Activated CD4-positive, alpha-beta memory T cell treated with anti-CD3 and anti-CD28 coated beads for 36 hours (primary cell): ENCODE measurements at regions of chr19 and their contacts with region 1.

Region 1: GRCh38 chr19:48588670-48589399 is 17.7 kb upstream of the SPACA4 start:
- DNase-seq: peak; percentile 92
- H3K4me3 Mint-ChIP-seq: peak overlapping the region; percentile 65
- H3K27ac Mint-ChIP-seq: peak overlapping the region; percentile 63
- H3K4me1 Mint-ChIP-seq: peaks cover 18% of the 10 kb centered on the region
- H3K27me3 Mint-ChIP-seq: no peaks in the 10 kb centered on the region

Region 2: DNA sequence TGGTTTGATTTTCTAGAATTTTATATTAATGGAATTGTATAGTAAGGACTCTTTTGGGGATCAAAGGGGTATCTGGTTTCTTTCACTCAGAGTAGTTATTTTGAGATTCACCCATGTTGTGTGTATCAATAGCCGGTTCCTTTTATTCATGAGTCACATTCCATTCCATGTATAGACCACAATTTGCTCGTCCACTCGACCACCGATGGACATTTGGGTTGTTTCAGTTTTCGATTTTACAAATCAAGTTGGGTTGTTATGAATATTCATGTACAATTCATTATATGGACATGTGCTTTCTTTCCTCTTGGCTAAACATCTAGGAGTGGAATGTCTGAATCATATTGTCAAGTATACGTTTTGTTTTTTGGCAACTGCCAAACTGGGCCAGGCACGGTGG is 273.1 kb before region 1 on chr19:
- CTCF ChIA-PET with region 1: interaction called, 13 read pairs
- POLR2A ChIA-PET with region 1: no interaction called
- intact Hi-C with region 1: loop called (anchors 10 kb)
- DNase-seq: no peak
- H3K4me3 Mint-ChIP-seq: no peak overlapping the region
- H3K27ac Mint-ChIP-seq: no peak overlapping the region
- H3K4me1 Mint-ChIP-seq: peaks cover 9% of the 10 kb centered on the region
- H3K27me3 Mint-ChIP-seq: no peaks in the 10 kb centered on the region

Region 3: GRCh38 chr19:48351341-48351752 is 237.5 kb before region 1 on chr19:
- CTCF ChIA-PET with region 1: interaction called, 19 read pairs
- POLR2A ChIA-PET with region 1: no interaction called
- intact Hi-C with region 1: no loop called
- DNase-seq: peak; percentile 89
- H3K4me3 Mint-ChIP-seq: no peak overlapping the region
- H3K27ac Mint-ChIP-seq: no peak overlapping the region
- H3K4me1 Mint-ChIP-seq: peaks cover 4% of the 10 kb centered on the region
- H3K27me3 Mint-ChIP-seq: no peaks in the 10 kb centered on the region

Region 4: GRCh38 chr19:48501496-48502350 is 87.1 kb before region 1 on chr19:
- CTCF ChIA-PET with region 1: interaction called, 137 read pairs
- POLR2A ChIA-PET with region 1: no interaction called
- intact Hi-C with region 1: loop called (anchors 1 kb)
- DNase-seq: peak; percentile 85
- H3K4me3 Mint-ChIP-seq: peak overlapping the region; percentile 62
- H3K27ac Mint-ChIP-seq: peak overlapping the region; percentile 65
- H3K4me1 Mint-ChIP-seq: peaks cover 13% of the 10 kb centered on the region
- H3K27me3 Mint-ChIP-seq: peaks cover 17% of the 10 kb centered on the region

Region 5: GRCh38 chr19:48608798-48609263 is 20.0 kb after region 1 on chr19:
- CTCF ChIA-PET with region 1: interaction called, 27 read pairs
- POLR2A ChIA-PET with region 1: no interaction called
- intact Hi-C with region 1: no loop called
- DNase-seq: peak; percentile 73
- H3K4me3 Mint-ChIP-seq: no peak overlapping the region
- H3K27ac Mint-ChIP-seq: no peak overlapping the region
- H3K4me1 Mint-ChIP-seq: no peaks in the 10 kb centered on the region
- H3K27me3 Mint-ChIP-seq: no peaks in the 10 kb centered on the region

Region 6: GRCh38 chr19:48770260-48770659 is 181.4 kb after region 1 on chr19:
- CTCF ChIA-PET with region 1: no interaction called
- POLR2A ChIA-PET with region 1: no interaction called
- intact Hi-C with region 1: no loop called
- DNase-seq: no peak
- H3K4me3 Mint-ChIP-seq: no peak overlapping the region
- H3K27ac Mint-ChIP-seq: no peak overlapping the region
- H3K4me1 Mint-ChIP-seq: no peaks in the 10 kb centered on the region
- H3K27me3 Mint-ChIP-seq: peaks cover 6% of the 10 kb centered on the region